ENCODE measurements at regions of chr3 and their contacts with region 1.

Region 1: DNA sequence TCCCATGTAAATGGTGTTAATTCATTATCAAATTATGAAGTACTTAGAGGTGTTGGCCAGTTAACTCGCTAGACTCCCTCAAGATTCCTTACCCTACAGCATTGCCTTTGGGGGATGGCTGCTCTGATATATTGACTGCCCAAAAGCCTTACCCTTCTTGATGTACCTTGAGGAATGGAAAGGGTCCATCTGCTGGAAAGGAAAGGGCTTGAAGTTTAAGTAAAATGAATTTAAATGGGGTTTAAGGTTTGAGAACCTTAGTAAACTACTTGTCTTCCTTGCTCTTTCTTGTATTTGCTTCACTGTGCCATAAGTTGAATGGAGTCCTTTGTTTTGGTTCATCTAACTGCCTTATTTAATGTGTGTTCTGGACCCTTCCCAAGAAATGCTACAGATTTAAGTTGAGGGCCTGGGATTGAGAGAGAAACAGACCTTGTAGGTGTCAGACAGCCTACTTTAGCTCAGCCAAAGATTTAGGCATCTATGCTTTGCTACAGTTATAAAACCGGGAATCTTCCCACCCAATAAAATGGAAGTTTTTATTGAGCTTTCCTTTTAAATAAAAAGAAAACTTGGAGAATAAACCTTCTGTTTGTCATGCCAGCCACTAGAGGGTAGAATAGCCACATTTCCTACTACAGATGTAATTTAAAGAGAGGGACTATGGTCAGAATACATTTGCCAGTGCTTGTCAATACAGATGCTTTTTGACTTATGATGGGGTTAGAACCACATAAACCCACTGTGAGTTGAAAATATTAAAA is 25.3 kb downstream of the CMSS1 start:
- DNase-seq: peak; percentile 51 to 56 (median 54)
- H3K4me3 ChIP-seq: no peak overlapping the region
- H3K27ac ChIP-seq: no peak overlapping the region
- H3K4me1 ChIP-seq: peaks cover 0 to 17% (median 5%) of the 10 kb centered on the region in 4 experiments
- H3K27me3 ChIP-seq: no peaks in the 10 kb centered on the region

Region 2: DNA sequence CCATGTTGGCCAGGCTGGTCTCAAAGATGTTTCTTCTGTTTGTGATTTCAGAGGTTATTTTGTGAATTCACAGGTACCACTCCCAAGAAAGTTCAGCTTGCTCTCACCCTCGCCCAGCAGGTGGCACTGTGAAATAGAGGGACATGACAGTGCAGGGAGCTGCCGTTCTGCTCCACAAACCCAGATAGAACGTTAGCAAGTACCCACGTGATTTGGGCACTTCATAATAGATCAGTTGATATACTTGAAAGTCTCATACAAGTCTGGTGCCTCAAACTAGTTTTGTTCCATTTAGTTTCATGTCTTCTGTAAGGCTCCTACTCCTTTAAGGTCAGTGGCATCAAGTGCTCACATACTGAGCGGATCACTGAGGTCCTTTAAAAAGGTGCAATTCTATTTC is 225.8 kb after region 1 on chr3:
- CTCF ChIA-PET with region 1: interaction called, 14 read pairs
- POLR2A ChIA-PET with region 1: interaction called, 9 read pairs
- DNase-seq: peak; percentile 85 to 91 (median 90)
- H3K4me3 ChIP-seq: peak overlapping the region in 2 of 7 experiments; percentile 41 to 63
- H3K27ac ChIP-seq: no peak overlapping the region
- H3K4me1 ChIP-seq: peaks cover 19 to 32% (median 28%) of the 10 kb centered on the region in 4 experiments
- H3K27me3 ChIP-seq: no peaks in the 10 kb centered on the region